ENCODE measurements at regions of chr1 and their contacts with region 1.

Region 1: DNA sequence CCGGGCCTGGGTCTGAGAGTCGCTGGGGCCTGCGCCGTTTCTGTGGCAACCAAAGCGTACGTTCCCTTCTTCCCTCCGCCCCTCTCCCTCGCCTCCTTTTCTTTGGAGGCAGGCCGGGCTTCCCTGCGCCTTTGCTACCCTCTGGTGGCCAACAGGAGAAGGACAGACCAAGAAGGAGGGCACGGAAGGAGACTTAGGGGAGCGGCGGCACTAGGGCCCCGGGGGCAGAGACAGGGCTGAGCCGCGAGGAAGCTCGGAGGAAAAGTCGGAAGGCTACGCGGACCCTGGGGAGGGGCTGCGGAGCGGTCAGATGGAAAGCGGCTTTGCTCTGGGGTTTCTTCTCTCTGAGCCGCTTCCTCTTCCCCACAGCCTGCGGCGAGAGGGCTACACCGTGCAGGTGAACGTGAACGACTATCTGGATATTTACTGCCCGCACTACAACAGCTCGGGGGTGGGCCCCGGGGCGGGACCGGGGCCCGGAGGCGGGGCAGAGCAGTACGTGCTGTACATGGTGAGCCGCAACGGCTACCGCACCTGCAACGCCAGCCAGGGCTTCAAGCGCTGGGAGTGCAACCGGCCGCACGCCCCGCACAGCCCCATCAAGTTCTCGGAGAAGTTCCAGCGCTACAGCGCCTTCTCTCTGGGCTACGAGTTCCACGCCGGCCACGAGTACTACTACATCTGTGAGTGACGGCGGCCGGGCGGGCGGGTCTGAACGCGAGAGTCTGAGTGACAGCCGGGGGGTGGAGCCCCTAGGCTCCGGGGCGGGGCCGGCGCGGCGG is 6.3 kb downstream of the EFNA3 start:
- DNase-seq: peak; percentile 92 to 96 (median 93)
- ATAC-seq: peak; percentile 83 to 91 (median 88)
- H3K4me3 ChIP-seq: peak overlapping the region; percentile 52 to 87 (median 73)
- H3K27ac ChIP-seq: peak overlapping the region; percentile 65 to 97 (median 88)
- H3K4me1 ChIP-seq: peaks cover 9 to 63% (median 44%) of the 10 kb centered on the region in 12 donors
- H3K27me3 ChIP-seq: peaks cover 38 to 46% (median 45%) of the 10 kb centered on the region in 9 donors
- CTCF ChIP-seq: peak; percentile 89 to 98 (median 93)
- POLR2A ChIP-seq: no peak

Region 2: GRCh38 chr1:154493276-154493675 is 591.6 kb before region 1 on chr1:
- intact Hi-C with region 1: no loop called
- DNase-seq: peak; percentile 71 to 79 (median 77)
- ATAC-seq: peak; percentile 73 to 91 (median 80)
- H3K4me3 ChIP-seq: peak overlapping the region in 6 of 12 donors; percentile 1 to 25 (median 10)
- H3K27ac ChIP-seq: peak overlapping the region; percentile 35 to 94 (median 76)
- H3K4me1 ChIP-seq: peaks cover 15 to 89% (median 61%) of the 10 kb centered on the region in 12 donors
- H3K27me3 ChIP-seq: peaks cover 0 to 2% (median 0%) of the 10 kb centered on the region in 9 donors
- CTCF ChIP-seq: no peak
- POLR2A ChIP-seq: no peak

Region 3: DNA sequence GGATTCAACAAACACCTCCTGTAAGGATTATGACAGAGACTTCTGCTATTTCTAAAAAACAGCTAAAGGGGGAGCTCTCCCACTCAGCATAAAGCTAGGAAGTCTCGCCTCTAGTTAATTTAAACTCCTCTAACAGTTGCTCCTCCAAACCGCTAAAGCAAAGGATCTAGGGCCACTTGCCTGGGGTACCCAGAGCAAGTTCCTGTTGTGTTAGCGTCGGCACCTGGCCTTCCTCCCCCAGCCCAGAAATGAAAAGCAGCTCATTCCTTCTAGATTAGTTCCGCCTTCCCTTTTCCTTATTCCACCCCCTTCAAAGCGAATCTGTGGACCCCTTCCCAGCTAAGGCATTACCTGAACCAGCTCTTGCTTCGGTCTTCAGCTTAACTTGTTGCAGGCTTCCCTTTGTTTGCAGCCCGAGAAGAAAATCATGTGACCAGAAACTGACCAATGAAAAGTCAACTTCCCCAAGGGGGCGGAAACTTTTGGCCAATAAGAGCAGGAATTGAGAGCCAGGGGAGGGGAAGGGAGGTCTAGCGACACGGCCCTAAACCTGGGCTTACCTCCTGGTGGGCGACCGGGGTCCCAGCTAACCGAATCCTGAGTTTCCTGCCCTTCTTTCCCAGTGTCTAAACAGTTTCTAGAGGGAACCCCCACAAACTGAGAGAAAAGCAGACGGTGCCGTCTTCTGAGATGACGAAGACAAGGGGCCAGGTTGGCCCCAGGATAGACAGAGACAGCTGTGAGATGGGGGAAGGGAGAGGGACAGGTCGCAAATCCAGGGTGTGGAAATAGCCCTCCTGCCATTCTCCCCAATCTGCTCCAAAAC is 129.0 kb before region 1 on chr1 and contains the start of gene PBXIP1:
- intact Hi-C with region 1: loop called in 3 of 10 experiments (anchors 5 to 10 kb)
- DNase-seq: peak; percentile 68 to 89 (median 79)
- ATAC-seq: peak; percentile 79 to 90 (median 82)
- H3K4me3 ChIP-seq: peak within 1 kb of the TSS; percentile 38 to 82 (median 61)
- H3K27ac ChIP-seq: peak within 1 kb of the TSS; percentile 59 to 85 (median 79)
- H3K4me1 ChIP-seq: peaks cover 8 to 74% (median 48%) of the 10 kb centered on the region in 12 donors
- H3K27me3 ChIP-seq: no peaks in the 10 kb centered on the region
- CTCF ChIP-seq: peak in 8 of 12 donors; percentile 6 to 45 (median 23)
- POLR2A ChIP-seq: peak in 1 of 2 donors; percentile 47
- total RNA-seq, gene PBXIP1: 38.2 to 70.4 (median 51.7) TPM

Region 4: GRCh38 chr1:154961497-154962262 is 123.2 kb before region 1 on chr1 and contains the start of gene PYGO2:
- intact Hi-C with region 1: loop called in 4 of 10 experiments (anchors 5 to 10 kb)
- DNase-seq: peak; percentile 82 to 92 (median 85)
- ATAC-seq: peak; percentile 67 to 89 (median 86)
- H3K4me3 ChIP-seq: peak within 1 kb of the TSS; percentile 80 to 99 (median 89)
- H3K27ac ChIP-seq: peak within 1 kb of the TSS; percentile 94 to 100 (median 99)
- H3K4me1 ChIP-seq: peaks cover 1 to 44% (median 23%) of the 10 kb centered on the region in 12 donors
- H3K27me3 ChIP-seq: no peaks in the 10 kb centered on the region
- CTCF ChIP-seq: peak; percentile 22 to 95 (median 68)
- POLR2A ChIP-seq: peak in 1 of 2 donors; percentile 84
- total RNA-seq, gene PYGO2: 10.7 to 19.2 (median 16.3) TPM

Region 5: DNA sequence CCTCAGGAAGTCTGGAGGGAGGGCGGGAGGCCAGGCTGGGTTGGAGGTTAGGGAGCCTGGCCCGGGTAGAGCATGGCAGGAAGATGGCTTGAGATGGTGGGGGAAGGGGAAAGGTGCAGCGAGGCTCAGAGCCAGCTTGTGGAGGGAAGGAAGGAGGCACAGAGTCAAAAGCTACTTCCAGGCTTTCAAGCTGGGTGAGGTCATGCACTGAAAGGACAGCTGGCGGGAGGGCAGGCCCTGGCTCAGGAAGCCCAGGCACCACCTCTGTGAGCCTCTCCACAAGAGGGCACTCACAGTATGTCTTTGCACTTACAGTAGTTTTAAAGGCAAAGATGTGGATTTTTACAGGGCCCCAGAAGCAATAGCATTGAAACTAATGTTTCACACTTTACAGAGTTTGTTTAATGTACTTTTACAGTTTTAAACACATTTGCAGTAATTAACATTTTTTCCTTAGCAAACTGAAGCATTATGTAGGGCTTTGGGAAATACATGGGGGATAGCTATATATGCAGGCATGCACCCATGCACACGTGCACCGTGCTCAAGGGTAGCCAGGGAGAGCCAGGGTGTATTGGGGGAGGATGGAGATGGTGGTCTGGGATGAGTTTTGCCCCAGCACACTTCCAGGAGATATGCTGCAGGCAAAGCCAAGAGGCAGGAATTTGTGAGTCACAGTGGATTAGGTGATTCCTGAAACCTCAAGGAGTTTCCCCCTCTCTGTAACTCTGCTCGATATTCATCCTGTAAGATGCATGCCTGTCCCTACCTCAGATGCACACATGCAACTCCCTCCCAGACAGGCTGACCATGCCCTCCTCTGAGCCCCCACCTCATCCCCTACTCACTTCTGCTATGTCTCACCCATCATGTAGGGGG is 39.9 kb before region 1 on chr1:
- intact Hi-C with region 1: loop called in 9 of 10 experiments (anchors 1 to 5 kb)
- DNase-seq: peak; percentile 83 to 88 (median 86)
- ATAC-seq: peak; percentile 87 to 95 (median 94)
- H3K4me3 ChIP-seq: no peak overlapping the region
- H3K27ac ChIP-seq: peak overlapping the region in 5 of 12 donors; percentile 6 to 57 (median 20)
- H3K4me1 ChIP-seq: peaks cover 0 to 27% (median 14%) of the 10 kb centered on the region in 12 donors
- H3K27me3 ChIP-seq: no peaks in the 10 kb centered on the region
- CTCF ChIP-seq: peak; percentile 68 to 90 (median 74)
- POLR2A ChIP-seq: no peak

Region 6: DNA sequence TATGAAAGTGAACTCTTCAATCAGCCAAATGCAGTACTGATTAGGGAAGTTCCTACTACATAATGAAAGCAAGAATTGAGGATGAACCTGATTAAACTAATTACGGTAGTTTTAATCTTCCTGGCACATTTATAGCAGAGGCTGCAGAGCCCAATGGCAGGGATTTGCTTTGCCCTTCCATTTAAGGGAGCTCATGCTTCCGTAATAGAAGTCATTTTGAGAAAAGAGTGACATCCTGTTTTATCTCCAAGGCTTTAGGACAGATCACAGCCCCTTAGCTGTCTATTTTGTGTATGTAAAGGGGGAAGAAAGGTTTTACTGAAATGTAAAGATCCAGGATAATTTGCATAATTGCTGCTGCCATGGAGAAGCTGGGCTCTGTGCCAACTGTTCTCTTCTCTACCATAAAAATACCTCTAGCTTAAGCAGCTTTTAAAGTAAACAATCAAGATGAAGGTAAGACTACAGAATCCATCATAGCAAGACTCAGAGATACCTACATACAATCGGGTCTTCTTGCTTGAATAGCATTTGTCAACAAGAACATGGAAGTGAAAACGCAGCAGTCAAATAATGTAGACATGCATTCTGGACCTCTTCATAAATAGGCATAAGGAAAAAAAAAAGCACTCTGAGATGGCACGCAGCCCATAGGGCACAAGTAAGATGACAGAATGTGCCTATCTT is 415.2 kb after region 1 on chr1:
- intact Hi-C with region 1: no loop called
- DNase-seq: no peak
- ATAC-seq: peak; percentile 27 to 87 (median 80)
- H3K4me3 ChIP-seq: peak overlapping the region in 4 of 12 donors; percentile 2 to 16 (median 4)
- H3K27ac ChIP-seq: peak overlapping the region in 2 of 12 donors; percentile 1 to 68
- H3K4me1 ChIP-seq: peaks cover 0 to 34% (median 12%) of the 10 kb centered on the region in 12 donors
- H3K27me3 ChIP-seq: no peaks in the 10 kb centered on the region
- CTCF ChIP-seq: no peak
- POLR2A ChIP-seq: no peak

Region 7: DNA sequence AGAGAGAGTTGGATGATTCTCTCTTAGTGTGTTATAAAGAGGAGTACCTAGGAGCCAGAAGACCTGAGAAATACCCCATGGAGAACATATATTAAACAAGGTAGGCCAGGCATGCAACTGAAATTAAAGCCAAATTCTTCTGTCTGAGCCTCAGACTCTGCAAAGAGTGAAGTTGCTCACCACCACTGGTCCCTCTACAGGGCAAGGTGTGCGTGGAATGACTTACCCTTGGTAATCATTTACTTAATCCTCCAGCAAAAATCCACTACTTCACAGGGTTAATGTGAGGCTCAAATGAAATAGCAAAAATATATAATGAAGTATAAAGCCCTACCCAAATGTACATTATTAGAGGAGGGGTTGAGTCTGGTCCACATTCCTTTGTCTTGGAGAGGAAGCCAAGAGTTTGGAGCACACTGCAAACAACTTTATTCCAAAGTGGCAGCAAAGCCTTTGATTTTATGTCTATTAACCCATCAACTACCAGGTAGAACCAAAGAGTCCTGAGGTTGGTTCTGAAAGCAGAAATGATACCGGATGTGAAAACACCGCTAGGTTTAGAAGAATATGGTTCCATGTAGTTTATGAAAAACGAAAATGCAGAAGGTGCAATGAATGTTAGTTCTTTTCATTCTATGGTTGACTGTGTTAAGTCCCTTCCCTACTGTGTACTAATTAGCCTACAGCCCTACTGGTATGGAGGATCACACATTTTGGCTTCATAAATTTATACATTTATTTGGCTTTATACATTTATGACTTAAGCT is 927.3 kb after region 1 on chr1:
- intact Hi-C with region 1: no loop called
- DNase-seq: no peak
- ATAC-seq: no peak
- H3K4me3 ChIP-seq: no peak overlapping the region
- H3K27ac ChIP-seq: no peak overlapping the region
- H3K4me1 ChIP-seq: no peaks in the 10 kb centered on the region
- H3K27me3 ChIP-seq: no peaks in the 10 kb centered on the region
- CTCF ChIP-seq: no peak
- POLR2A ChIP-seq: no peak

Measured in heart left ventricle (tissue), 16 donors.